ENCODE measurements at regions of chr6 and their contacts with region 1.

Region 1: GRCh38 chr6:52503848-52504781 is 72.7 kb downstream of the TRAM2 start:
- DNase-seq: peak; percentile 96 to 99
- ATAC-seq: peak; percentile 81 to 82
- H3K4me3 ChIP-seq: peak overlapping the region; percentile 3 to 35 (median 19)
- H3K27ac ChIP-seq: peak overlapping the region; percentile 82 to 89 (median 86)
- H3K4me1 ChIP-seq: peaks cover 42 to 45% of the 10 kb centered on the region in 2 donors
- H3K27me3 ChIP-seq: no peaks in the 10 kb centered on the region
- CTCF ChIP-seq: no peak
- POLR2A ChIP-seq: peak; percentile 13 to 41

Region 2: DNA sequence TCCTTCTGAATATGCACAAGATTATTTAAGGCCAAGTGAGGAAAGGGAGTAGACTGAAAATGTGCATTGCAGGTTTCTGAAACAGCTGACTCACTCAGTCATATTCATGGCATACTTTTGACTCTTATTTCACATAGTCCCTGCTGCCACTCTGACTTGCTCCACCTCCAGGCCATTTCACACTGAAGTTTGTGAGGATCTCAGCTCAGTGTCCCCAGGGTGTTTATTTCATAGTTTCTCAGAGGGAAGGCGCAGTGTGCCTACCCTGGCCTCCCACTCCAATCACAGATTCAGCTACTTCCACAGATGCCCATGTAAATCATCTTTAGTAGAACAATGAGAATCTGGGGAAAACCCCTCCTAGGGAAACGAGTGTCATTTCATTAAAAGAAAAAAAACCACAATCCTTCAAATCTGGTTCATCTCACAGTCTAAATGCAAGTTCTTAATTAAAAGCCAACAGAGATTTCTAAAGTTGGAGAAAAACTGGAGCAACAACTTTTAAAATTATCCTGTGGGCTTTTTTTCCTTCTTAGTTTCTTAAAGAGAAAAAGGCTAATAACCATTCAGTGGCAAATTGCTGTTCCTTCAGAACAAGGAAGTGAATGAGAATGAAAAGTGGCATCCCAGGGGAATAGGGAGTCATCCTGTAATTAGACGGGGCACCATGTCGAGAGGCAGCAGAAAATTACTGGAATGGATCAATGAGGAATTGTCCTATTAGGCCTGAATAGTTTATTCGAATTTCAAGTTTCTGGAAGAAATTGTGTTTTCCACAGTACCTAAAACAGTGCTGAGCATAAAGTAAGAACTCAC is 1551.8 kb before region 1 on chr6:
- in situ Hi-C with region 1: no loop called
- intact Hi-C with region 1: no loop called
- DNase-seq: no peak
- ATAC-seq: no peak
- H3K4me3 ChIP-seq: no peak overlapping the region
- H3K27ac ChIP-seq: no peak overlapping the region
- H3K4me1 ChIP-seq: peaks cover 0 to 2% of the 10 kb centered on the region in 2 donors
- H3K27me3 ChIP-seq: no peaks in the 10 kb centered on the region
- CTCF ChIP-seq: no peak
- POLR2A ChIP-seq: no peak

Region 3: DNA sequence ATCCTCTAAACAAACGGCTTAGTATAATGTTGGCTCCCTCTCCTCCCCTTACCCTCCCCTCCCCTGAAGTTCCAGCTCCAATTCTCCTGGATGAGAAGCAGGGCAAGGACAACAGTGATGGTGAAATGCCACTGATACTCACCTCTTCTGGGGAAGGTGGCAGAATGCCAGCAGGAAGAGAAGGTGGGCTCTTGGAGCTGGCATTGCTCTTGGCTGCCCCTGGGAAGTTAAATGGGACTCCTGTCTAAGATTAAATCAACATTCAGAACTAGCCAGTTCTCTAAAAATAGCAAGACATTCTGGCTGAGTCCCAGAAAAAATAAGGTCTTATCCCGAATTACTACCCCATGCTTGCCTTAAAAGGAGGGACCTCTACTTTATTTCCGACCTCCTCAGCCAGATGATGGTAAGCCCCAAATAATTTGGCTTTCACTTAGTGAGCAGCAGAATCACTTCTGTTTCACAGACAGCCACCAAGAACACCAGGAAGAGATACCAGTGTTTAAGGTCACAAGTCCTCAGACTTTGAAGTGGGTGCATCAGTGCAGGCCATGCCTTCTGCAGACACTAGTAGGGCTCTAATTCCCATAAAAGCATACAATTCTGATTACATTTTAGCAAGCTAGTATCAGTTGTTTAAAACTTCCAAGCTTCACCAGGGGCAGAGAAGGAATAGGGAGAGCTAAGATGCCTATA is 364.0 kb before region 1 on chr6:
- in situ Hi-C with region 1: no loop called
- intact Hi-C with region 1: loop called (anchors 10 kb)
- DNase-seq: peak in 1 of 2 donors; percentile 23
- ATAC-seq: peak in 1 of 2 donors; percentile 27
- H3K4me3 ChIP-seq: peak overlapping the region in 2 of 4 donors; percentile 27 to 60
- H3K27ac ChIP-seq: peak overlapping the region; percentile 74 to 83 (median 78)
- H3K4me1 ChIP-seq: peaks cover 40 to 58% of the 10 kb centered on the region in 2 donors
- H3K27me3 ChIP-seq: no peaks in the 10 kb centered on the region
- CTCF ChIP-seq: no peak
- POLR2A ChIP-seq: no peak

Region 4: GRCh38 chr6:52284460-52285176 is 219.5 kb before region 1 on chr6 and contains the start of gene MCM3:
- in situ Hi-C with region 1: no loop called
- intact Hi-C with region 1: loop called (anchors 5 kb)
- DNase-seq: peak; percentile 96 to 98
- ATAC-seq: peak; percentile 100
- H3K4me3 ChIP-seq: peak within 1 kb of the TSS; percentile 75 to 91 (median 82)
- H3K27ac ChIP-seq: peak within 1 kb of the TSS; percentile 55 to 76 (median 70)
- H3K4me1 ChIP-seq: peaks cover 15 to 18% of the 10 kb centered on the region in 2 donors
- H3K27me3 ChIP-seq: no peaks in the 10 kb centered on the region
- CTCF ChIP-seq: peak in 1 of 5 experiments; percentile 23
- POLR2A ChIP-seq: no peak
- total RNA-seq, gene MCM3: 9.1 to 12.9 (median 9.8) TPM

Region 5: DNA sequence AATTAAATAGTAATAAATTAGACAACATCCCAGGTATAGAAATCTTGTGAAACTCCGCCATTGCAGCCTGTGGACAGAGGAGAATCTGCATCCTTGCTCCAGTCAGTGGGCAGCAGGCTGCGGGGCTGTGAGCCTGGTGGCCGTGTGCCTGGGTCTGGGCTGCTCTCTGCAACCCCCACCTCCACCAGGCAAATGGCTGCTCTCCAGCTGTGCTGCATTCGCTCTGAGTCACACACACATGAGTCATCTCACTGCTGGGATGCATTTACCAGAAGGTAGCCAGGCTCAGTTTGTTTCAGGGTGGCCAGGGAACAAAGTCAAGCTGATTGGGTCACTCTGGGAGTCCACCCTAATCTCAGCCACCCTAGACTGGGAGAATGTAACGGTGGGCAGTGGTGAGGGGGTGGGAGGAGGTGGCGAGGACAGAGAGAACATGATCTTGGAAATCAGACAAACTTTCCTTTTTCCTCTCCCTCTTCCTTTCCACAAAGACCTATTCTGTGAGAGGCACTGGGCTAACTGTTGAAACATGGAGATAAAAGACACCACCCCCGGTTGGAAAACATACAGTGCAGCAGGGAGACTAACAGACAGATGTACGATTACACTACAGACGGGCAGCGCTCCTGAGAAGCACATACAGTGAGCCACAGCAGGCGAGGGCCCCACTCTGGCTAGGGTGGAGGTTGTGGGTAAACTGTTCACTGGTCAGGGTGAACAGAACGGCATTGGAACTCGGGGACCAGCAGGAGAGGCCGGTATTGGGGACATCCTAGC is 13.6 kb after region 1 on chr6:
- in situ Hi-C with region 1: no loop called
- intact Hi-C with region 1: loop called (anchors 1 kb)
- DNase-seq: peak; percentile 89 to 91
- ATAC-seq: peak; percentile 99
- H3K4me3 ChIP-seq: no peak overlapping the region
- H3K27ac ChIP-seq: peak overlapping the region; percentile 72 to 82 (median 80)
- H3K4me1 ChIP-seq: peaks cover 27 to 36% of the 10 kb centered on the region in 2 donors
- H3K27me3 ChIP-seq: no peaks in the 10 kb centered on the region
- CTCF ChIP-seq: no peak
- POLR2A ChIP-seq: peak; percentile 16 to 54

Region 6: GRCh38 chr6:52577022-52577777 is 73.1 kb after region 1 on chr6 and contains the start of gene TRAM2:
- in situ Hi-C with region 1: loop called in 1 of 4 experiments (anchors 25 kb)
- intact Hi-C with region 1: loop called (anchors 1 kb)
- DNase-seq: peak; percentile 63 to 69
- ATAC-seq: peak; percentile 86 to 87
- H3K4me3 ChIP-seq: peak within 1 kb of the TSS; percentile 72 to 82 (median 79)
- H3K27ac ChIP-seq: peak within 1 kb of the TSS; percentile 88 to 95 (median 93)
- H3K4me1 ChIP-seq: peaks cover 29 to 32% of the 10 kb centered on the region in 2 donors
- H3K27me3 ChIP-seq: no peaks in the 10 kb centered on the region
- CTCF ChIP-seq: peak in 1 of 5 experiments; percentile 4
- POLR2A ChIP-seq: peak in 1 of 2 donors; percentile 31
- total RNA-seq, gene TRAM2: 2.4 to 4.5 (median 3.6) TPM

Region 7: DNA sequence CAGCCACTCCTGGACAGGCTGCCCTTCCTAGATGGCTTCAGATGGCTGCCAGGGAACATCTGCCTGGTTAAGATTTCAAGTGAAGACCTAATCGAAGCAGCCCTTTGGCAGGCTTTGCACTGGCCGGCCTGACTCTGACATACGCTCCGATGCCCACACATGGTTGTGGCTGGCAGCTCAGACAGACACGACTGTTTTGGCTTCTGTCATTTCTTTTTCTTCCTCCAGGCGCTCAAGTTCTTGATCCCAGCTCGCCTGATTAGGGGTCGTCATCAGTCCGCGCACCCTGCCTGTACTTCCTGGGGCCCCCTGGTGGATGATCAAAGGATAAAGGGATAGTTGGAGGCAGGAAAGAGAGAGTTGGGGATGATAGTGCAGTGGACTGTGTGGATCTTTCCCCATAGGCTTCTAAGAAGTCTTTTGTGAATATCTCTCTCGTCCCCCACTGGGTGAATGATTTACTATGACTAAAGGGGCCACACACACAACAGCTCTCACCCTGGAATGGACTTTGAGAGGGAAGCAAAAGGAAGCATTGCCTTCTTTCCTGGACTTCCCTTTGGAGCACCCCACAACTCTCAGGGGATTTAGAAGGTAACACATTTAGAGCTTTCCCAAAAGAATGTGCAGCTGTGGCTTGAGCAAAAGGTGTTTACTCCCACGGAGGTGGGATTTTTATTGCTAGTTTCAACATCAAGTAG is 94.2 kb after region 1 on chr6:
- in situ Hi-C with region 1: loop called in 1 of 4 experiments (anchors 25 kb)
- intact Hi-C with region 1: loop called (anchors 5 kb)
- DNase-seq: peak in 1 of 2 donors; percentile 40
- ATAC-seq: peak; percentile 39 to 79
- H3K4me3 ChIP-seq: peak overlapping the region in 3 of 4 donors; percentile 22 to 42 (median 35)
- H3K27ac ChIP-seq: no peak overlapping the region
- H3K4me1 ChIP-seq: peaks cover 0 to 15% of the 10 kb centered on the region in 2 donors
- H3K27me3 ChIP-seq: no peaks in the 10 kb centered on the region
- CTCF ChIP-seq: peak; percentile 55 to 74 (median 70)
- POLR2A ChIP-seq: no peak

Region 8: GRCh38 chr6:52664186-52664990 is 160.3 kb after region 1 on chr6:
- in situ Hi-C with region 1: no loop called
- intact Hi-C with region 1: loop called (anchors 5 kb)
- DNase-seq: peak; percentile 66 to 87
- ATAC-seq: peak; percentile 92 to 98
- H3K4me3 ChIP-seq: peak overlapping the region; percentile 66 to 76 (median 67)
- H3K27ac ChIP-seq: peak overlapping the region; percentile 51 to 73 (median 54)
- H3K4me1 ChIP-seq: peaks cover 0 to 4% of the 10 kb centered on the region in 2 donors
- H3K27me3 ChIP-seq: no peaks in the 10 kb centered on the region
- CTCF ChIP-seq: no peak
- POLR2A ChIP-seq: peak; percentile 49 to 62

Measured in gastrocnemius medialis (tissue), 4 donors.